BJ (cell line): ENCODE measurements at regions of chr6 and their contacts with region 1.

Region 1: DNA sequence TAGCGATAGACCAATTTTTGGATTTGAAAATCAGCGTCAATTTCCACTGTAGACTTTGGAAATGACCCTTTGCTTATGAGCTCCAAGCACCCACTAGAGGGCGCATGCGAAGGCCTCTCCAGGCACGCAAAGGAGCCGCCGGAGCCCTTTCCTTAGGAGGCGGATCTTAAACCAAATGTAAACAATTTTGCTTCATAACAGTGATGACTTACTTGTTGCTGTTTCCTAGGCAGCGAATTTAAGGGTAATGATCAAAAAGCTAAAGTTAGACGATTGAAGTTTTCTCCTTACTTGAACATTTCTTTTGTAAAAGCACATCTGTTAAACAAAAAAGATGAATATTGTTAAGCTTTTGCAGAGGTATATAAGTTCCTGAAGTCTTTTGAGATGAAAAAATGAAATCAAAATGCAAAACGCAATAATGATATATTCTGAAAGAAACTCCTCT is 29.2 kb upstream of the EXOC2 start:
- DNase-seq: no peak
- H3K4me3 ChIP-seq: no peak overlapping the region
- H3K27me3 ChIP-seq: peaks cover 7% of the 10 kb centered on the region
- CTCF ChIP-seq: peak; percentile 97

Region 2: DNA sequence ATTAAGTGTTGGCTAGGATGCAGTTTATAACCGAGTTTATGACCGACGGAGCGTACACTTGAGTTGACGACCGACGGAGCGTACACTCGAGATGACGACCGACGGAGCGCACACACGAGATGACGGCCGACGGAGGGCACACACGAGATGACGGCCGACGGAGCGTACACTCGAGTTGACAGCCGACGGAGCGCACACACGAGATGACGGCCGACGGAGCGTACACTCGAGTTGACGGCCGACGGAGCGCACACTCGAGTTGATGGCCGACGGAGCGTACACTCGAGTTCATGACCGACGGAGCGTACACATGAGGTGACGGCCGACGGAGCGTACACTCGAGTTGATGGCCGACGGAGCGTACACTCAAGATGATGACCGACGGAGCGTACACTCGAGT is 185.0 kb before region 1 on chr6:
- CTCF ChIA-PET with region 1: no interaction called
- POLR2A ChIA-PET with region 1: no interaction called
- DNase-seq: no peak
- H3K4me3 ChIP-seq: no peak overlapping the region
- H3K27me3 ChIP-seq: no peaks in the 10 kb centered on the region
- CTCF ChIP-seq: no peak

Region 3: DNA sequence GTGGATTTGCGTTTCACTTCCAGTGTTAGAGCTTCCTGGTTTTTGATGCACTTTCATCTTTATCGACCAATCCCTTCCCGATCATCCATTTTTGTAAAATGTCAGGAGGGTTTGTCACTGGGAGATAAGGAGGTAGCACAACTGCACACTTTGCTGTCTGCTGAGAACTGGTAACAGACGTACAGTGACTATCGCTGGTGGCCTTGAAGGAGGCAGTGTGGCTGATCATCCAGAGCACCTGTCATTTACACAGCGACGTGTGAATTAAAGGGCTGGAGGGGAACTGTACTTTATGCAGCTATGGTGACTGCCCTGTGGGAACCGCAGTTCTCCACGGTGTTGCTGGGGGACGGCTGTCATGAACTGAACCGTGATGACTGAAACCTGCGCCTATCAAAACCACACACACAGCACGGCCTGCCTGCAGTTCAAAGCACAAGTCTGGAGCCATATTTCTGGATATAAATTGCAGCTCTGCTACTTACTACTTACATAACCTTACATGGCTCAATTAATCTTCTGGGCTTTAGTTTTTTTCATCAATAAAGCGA is 115.2 kb before region 1 on chr6:
- CTCF ChIA-PET with region 1: no interaction called
- POLR2A ChIA-PET with region 1: no interaction called
- DNase-seq: no peak
- H3K4me3 ChIP-seq: no peak overlapping the region
- H3K27me3 ChIP-seq: no peaks in the 10 kb centered on the region
- CTCF ChIP-seq: no peak

Region 4: GRCh38 chr6:617445-618100 is 104.5 kb before region 1 on chr6:
- CTCF ChIA-PET with region 1: interaction called, 10 read pairs
- POLR2A ChIA-PET with region 1: no interaction called
- DNase-seq: no peak
- H3K4me3 ChIP-seq: no peak overlapping the region
- H3K27me3 ChIP-seq: no peaks in the 10 kb centered on the region
- CTCF ChIP-seq: no peak

Region 5: GRCh38 chr6:710601-711571 is 11.2 kb before region 1 on chr6:
- CTCF ChIA-PET with region 1: interaction called, 19 read pairs
- POLR2A ChIA-PET with region 1: no interaction called
- DNase-seq: no peak
- H3K4me3 ChIP-seq: peak overlapping the region; percentile 46
- H3K27me3 ChIP-seq: no peaks in the 10 kb centered on the region
- CTCF ChIP-seq: no peak

Region 6: GRCh38 chr6:747028-747427 is 24.9 kb after region 1 on chr6:
- CTCF ChIA-PET with region 1: interaction called, 15 read pairs
- POLR2A ChIA-PET with region 1: no interaction called
- DNase-seq: no peak
- H3K4me3 ChIP-seq: no peak overlapping the region
- H3K27me3 ChIP-seq: peaks cover 3% of the 10 kb centered on the region; the same call in 1 of the 2 replicates
- CTCF ChIP-seq: no peak

Region 7: DNA sequence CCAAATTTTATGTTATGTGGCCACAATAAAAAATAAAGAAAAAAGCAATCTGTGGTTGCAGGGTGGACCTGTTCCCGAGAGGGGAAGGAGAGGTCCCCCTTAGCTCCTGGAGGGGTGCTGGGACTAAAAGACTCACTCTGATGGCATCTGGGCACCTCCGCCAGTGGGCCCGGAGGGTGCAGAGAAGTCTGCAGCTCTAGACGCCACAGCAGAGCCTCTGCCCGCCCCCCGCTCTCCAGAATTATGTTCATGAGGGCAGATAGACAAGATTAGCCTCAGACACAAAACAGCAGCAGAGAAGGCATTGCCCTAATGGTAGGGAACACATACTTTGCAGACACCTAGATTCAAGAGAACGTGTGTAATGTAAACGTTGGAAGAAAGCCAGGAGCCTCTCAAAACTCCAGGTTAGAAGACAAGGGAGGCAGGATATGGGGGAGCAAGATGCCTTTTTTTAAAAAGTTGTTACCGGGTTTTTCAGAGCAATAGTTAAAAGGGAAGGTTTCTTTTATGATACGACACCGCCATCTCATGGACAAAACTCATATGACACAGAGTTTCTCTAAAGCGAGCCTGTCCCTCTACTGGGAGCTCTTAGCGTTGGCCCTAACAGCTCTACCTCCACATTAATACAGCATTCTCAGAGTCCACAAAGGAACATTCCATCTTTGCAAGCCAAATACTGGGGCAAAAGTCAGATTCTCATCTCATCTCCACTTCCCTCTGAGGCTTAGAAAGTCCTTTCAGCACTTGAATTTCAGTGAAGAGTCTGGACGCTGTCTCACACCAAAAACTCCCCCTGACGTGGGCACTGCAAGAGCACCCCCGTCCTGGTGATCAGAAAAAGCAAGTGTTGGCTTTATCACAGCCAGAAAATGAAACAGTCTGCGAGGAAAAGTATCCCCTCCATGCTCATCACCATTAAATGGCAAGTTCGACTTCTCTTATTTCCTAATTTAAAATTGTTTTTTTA is 714.5 kb after region 1 on chr6:
- CTCF ChIA-PET with region 1: interaction called, 17 read pairs
- POLR2A ChIA-PET with region 1: no interaction called
- DNase-seq: peak; percentile 23
- H3K4me3 ChIP-seq: no peak overlapping the region
- H3K27me3 ChIP-seq: no peaks in the 10 kb centered on the region
- CTCF ChIP-seq: peak; percentile 73